Left colon (tissue), 2 donors: ENCODE measurements at regions of chr12 and their contacts with region 1.

Region 1: DNA sequence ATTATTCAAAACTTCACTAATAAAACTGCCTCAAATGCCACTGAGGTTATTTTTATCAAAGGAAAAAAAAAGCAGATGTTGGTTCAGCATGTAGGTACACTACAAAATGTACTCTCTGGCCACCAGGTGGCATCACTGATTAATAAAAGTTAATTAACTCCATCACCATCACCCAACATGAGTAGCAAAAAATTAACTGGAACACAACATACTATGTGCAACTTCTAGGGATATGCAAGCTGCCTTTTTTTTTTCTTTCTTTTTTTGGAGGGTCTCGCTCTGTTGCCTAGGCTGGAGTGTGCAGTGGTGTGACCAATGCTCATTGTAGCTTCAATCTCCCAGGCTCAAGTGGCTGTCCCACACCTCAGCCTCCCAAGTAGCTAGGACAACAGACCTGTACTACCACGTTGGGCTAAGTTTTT is 43.8 kb upstream of the NR2C1 start:
- DNase-seq: peak; percentile 66 to 76
- ATAC-seq: peak; percentile 90

Region 2: DNA sequence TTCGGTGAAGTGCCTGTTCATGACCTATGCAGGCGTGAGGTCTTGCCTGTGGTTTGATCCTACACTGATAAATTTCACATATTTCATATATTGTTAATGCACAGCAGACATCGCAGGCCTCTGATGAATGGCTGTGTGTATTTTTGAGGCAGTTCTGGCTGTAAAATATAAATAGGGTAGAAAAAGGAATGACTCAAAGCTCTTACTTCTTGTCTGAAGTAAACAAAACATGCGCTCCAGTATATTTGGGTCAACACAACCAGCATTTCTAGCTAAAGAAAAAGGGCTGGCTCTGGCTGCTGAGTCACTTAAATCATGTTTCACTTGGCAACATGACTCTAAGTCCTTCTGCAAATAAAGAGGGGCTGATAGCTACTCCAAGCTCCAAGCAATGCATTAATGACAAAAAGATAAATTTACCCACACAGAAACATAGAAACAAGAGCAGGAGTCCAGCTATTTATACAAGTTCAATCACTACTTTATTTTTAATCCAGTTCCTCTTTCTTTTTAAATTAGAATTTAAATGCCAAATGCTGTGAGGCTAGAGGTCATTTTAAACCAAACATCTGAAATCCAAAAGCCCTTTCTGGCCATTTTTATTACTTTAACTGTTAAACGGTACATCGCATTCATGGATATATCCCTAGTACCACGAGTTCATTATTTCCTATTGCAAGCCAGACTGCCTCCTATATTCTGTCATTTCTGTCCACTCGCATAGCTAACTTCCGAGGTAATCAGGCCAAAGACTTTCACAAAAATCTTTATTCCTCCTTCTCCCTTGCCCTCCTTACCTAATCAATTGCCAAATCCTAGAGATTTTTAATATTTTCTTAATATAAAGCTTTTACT is 412.5 kb before region 1 on chr12:
- intact Hi-C with region 1: no loop called
- DNase-seq: no peak
- ATAC-seq: no peak

Region 3: GRCh38 chr12:95217377-95218149 is 100.4 kb after region 1 on chr12 and contains the starts of genes FGD6 and VEZT:
- intact Hi-C with region 1: loop called in 1 of 2 experiments (anchors 5 kb)
- DNase-seq: peak; percentile 98 to 99
- ATAC-seq: peak; percentile 86
- total RNA-seq, gene FGD6: 18.7 to 23.8 TPM
- total RNA-seq, gene VEZT: 50.9 to 54.4 TPM

Region 4: GRCh38 chr12:95227818-95228356 is 110.7 kb after region 1 on chr12:
- intact Hi-C with region 1: no loop called
- DNase-seq: no peak
- ATAC-seq: no peak

Region 5: DNA sequence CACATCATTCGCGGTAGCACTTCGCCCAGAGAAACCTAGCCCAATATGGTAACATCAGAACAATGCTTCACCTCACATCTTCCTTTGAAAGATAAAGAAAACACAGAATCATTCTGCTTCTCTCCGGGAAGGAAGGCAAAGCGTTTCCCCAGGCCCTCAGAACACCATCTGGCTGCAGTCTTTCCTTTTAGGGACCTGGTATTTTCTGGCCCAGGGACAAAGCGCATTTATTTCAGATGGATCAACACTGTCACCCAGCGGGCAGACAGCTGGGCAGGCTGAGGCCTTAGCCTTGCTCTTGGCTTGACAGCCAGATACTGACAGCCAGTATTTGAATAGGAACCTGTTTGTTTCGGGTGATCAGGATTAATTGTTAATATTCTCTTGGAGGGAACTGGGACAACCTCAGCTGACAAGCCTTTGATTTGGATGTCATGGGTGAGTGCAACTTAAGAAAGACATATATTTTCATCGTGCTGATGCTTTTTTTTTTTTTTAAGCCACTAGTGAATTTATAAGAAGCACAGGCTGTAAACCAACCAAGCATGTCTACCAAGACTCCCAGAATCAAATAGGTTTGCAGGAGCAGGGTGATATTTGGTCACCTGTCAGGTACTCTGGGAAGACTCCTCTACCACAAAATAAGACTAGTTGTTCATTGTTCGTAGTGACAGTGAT is 219.3 kb after region 1 on chr12:
- intact Hi-C with region 1: loop called (anchors 5 to 10 kb)
- DNase-seq: peak; percentile 62 to 63
- ATAC-seq: peak; percentile 97

Region 6: DNA sequence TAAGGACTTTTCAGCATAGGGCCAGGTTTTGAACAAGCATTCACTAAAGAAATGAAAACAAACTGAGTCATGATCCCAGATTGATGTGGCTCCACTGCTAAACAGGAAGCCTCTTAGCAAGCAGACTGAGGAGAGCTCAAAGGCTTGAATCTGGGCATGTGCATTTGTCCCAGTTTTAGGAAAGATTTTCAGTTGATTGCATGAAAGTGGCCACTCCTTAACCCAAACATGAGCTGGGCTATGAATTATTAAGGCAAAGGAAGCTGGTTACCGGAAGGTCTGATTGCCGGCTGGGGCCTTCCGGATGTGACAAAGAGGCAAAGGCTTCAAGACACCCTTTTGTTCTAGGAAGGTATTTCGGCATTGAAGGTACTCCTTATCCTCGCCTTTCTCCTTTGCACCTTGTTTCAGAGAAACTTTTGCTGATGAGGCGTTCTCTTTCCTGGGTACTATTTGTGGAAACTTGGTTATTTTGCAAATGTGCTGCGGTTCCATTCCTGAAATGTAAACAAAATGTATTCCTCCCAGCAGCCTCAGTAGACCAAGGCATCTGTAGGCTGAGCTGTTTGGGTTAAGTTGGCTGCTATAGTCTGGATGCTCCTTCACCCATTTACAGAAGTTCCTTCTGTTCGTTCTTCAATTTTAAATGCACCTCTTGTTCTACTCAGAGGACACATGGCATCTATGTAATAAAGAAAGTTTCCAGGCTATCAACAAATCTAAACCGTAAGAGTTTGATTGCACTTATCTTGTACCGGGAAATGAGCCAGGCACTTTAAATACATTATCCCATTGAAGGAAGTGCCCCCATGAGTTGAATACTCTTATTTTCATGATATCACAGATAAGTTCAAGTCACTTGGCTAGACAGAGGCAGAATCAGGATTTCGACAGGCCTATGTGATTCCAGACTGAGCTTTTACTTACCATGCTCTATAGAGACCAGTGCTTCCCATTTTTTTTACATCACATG is 241.2 kb after region 1 on chr12:
- intact Hi-C with region 1: no loop called
- DNase-seq: no peak
- ATAC-seq: peak; percentile 92

Region 7: GRCh38 chr12:95532851-95533250 is 415.7 kb after region 1 on chr12:
- intact Hi-C with region 1: loop called in 1 of 2 experiments (anchors 5 kb)
- DNase-seq: no peak
- ATAC-seq: peak; percentile 62